Astrocyte of the cerebellum (primary cell): ENCODE measurements at regions of chrX and their contacts with region 1.

Region 1: GRCh38 chrX:11188664-11189063 is 77.5 kb downstream of the HCCS start:
- DNase-seq: no peak
- H3K4me3 ChIP-seq: no peak overlapping the region
- CTCF ChIP-seq: no peak

Region 2: DNA sequence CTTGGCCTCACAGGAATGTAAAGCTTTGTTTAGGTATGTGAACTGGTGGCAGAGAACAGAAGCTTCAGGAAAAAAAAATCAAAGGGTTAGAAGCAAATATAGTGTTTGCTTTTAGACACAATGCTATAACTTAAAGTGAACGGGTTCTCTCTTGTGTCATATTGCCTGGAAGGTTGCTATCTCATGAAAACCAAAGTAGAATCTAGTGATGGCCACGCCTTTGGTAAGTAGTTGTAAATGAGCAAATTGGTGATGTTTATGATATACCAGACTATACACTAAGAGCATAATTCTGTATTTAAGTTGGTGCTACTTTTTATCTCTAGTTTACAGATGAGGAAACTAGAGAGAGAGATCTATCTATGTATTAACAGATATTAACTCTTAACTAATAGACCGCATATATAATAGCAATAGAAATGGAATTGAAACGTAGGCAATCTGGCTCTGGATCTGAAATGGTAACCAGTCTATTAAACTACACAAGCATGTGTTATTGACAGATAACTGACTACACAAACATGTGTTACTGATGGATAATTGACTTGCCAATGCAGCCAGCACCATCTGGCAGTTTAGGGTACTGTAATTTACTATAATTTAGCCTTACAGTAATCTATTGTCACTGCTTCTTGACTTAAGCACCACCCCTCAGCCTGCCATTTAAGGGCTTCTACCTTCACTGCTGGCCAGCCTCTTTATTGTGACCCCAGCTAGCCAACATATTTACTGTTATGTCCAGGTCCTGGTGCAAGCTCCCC is 36.7 kb before region 1 on chrX:
- in situ Hi-C with region 1: loop called (anchors 5 kb)
- DNase-seq: peak; percentile 2
- H3K4me3 ChIP-seq: no peak overlapping the region
- CTCF ChIP-seq: no peak

Region 3: GRCh38 chrX:11239233-11239632 is 50.6 kb after region 1 on chrX:
- in situ Hi-C with region 1: no loop called
- DNase-seq: no peak
- H3K4me3 ChIP-seq: no peak overlapping the region
- CTCF ChIP-seq: no peak